ENCODE measurements at regions of chr2 and their contacts with region 1.

Region 1: DNA sequence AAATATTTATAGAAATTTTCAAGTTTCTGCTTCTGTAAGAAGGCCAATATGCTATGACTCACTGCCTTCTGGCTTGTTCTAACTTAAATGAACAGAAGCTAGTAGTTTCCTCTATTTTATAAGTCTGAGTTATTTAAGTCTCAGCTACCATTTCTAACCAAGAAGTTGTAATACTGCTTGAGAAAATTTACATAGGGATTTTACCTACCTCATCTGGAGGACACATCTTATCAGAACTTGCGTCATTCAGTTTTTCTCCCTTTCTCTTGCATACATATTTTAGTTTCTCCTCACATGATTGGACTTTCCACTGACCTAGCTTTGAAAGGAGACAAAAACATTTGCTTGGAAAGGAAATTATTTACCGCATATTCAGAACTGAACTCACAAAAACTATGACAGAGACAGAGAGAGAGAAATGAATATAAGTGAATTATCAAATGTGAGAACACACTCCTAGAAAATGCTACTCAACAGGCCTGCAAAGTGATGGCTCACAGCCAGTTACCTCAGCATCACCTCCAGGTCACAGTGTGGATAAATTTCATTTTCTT is 81.1 kb upstream of the CD302 start:
- DNase-seq: no peak
- H3K4me3 ChIP-seq: no peak overlapping the region
- H3K27ac ChIP-seq: no peak overlapping the region
- H3K4me1 ChIP-seq: no peaks in the 10 kb centered on the region
- H3K27me3 ChIP-seq: no peaks in the 10 kb centered on the region
- CTCF ChIP-seq: no peak
- POLR2A ChIP-seq: no peak

Region 2: GRCh38 chr2:159497256-159497655 is 381.9 kb before region 1 on chr2:
- intact Hi-C with region 1: no loop called
- DNase-seq: no peak
- H3K4me3 ChIP-seq: no peak overlapping the region
- H3K27ac ChIP-seq: peak overlapping the region; percentile 4
- H3K4me1 ChIP-seq: no peaks in the 10 kb centered on the region
- H3K27me3 ChIP-seq: no peaks in the 10 kb centered on the region
- CTCF ChIP-seq: no peak
- POLR2A ChIP-seq: no peak

Region 3: GRCh38 chr2:159998961-159999360 is 119.8 kb after region 1 on chr2:
- intact Hi-C with region 1: no loop called
- DNase-seq: no peak
- H3K4me3 ChIP-seq: no peak overlapping the region
- H3K27ac ChIP-seq: no peak overlapping the region
- H3K4me1 ChIP-seq: no peaks in the 10 kb centered on the region
- H3K27me3 ChIP-seq: no peaks in the 10 kb centered on the region
- CTCF ChIP-seq: no peak
- POLR2A ChIP-seq: no peak

Region 4: GRCh38 chr2:160928854-160929620 is 1049.9 kb after region 1 on chr2:
- intact Hi-C with region 1: loop called (anchors 5 kb)
- DNase-seq: no peak
- H3K4me3 ChIP-seq: no peak overlapping the region
- H3K27ac ChIP-seq: no peak overlapping the region
- H3K4me1 ChIP-seq: peaks cover 16% of the 10 kb centered on the region
- H3K27me3 ChIP-seq: no peaks in the 10 kb centered on the region
- CTCF ChIP-seq: no peak
- POLR2A ChIP-seq: no peak